Common myeloid progenitor, CD34-positive (primary cell): ENCODE measurements at regions of chr11 and their contacts with region 1.

Region 1: DNA sequence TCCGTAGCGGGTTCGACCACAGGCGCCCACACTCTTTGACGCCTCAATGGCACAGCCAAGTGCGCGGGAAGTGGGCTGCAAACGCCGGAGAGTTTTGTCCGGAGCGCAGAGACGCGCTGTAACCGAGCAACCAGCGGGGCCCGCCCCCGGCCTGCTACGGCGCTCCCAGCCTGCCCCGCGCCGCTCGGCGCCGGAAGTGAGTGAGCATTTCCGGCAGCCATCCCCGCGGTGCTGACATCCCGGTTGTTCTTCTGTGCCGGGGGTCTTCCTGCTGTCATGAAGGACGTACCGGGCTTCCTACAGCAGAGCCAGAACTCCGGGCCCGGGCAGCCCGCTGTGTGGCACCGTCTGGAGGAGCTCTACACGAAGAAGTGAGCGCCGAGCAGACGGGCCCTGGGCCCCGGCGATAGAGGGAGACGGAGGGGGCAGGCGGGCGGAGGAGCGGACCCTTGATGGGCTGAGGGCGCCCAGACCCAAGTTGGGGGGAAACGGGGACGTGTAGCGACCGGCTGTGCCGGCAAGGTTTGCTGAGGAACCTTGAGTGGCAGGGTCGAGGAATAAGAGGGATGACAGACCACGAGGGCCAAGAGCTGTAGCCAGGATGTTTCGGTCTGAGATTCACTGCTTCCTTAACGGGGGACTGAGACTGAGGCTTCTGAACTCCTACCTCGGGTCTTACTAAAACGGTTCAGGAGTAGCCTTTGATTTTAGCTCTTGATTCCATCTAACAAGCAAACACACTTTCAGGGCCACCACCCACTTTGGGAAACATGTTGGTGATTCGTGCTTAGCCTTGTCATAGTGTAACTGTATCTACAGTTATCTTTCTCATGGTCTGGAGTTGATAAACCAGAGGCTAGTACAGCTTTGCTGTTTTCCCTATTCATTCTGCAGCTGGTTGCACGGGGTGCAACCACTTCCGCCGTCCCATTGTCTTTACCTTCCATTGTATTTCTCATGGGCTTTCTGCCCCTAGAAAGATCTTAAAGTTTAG is at the start of gene PSMD13:
- DNase-seq: peak; percentile 89 to 91 (median 90)
- H3K4me3 ChIP-seq: peak within 1 kb of the TSS; percentile 88 to 99 (median 94)
- H3K27ac ChIP-seq: peak within 1 kb of the TSS; percentile 93 to 97
- H3K4me1 ChIP-seq: peaks cover 12 to 28% (median 19%) of the 10 kb centered on the region in 4 experiments
- H3K27me3 ChIP-seq: no peaks in the 10 kb centered on the region

Region 2: GRCh38 chr11:207208-207862 is 29.7 kb before region 1 on chr11 and contains the starts of genes BET1L and RIC8A:
- CTCF ChIA-PET with region 1: interaction called, 5 read pairs
- POLR2A ChIA-PET with region 1: interaction called, 11 read pairs
- DNase-seq: peak; percentile 99 to 100 (median 100)
- H3K4me3 ChIP-seq: peak within 1 kb of the TSS; percentile 79 to 99 (median 92)
- H3K27ac ChIP-seq: peak within 1 kb of the TSS; percentile 92 to 97
- H3K4me1 ChIP-seq: peaks cover 13 to 61% (median 53%) of the 10 kb centered on the region in 4 experiments
- H3K27me3 ChIP-seq: no peaks in the 10 kb centered on the region

Region 3: DNA sequence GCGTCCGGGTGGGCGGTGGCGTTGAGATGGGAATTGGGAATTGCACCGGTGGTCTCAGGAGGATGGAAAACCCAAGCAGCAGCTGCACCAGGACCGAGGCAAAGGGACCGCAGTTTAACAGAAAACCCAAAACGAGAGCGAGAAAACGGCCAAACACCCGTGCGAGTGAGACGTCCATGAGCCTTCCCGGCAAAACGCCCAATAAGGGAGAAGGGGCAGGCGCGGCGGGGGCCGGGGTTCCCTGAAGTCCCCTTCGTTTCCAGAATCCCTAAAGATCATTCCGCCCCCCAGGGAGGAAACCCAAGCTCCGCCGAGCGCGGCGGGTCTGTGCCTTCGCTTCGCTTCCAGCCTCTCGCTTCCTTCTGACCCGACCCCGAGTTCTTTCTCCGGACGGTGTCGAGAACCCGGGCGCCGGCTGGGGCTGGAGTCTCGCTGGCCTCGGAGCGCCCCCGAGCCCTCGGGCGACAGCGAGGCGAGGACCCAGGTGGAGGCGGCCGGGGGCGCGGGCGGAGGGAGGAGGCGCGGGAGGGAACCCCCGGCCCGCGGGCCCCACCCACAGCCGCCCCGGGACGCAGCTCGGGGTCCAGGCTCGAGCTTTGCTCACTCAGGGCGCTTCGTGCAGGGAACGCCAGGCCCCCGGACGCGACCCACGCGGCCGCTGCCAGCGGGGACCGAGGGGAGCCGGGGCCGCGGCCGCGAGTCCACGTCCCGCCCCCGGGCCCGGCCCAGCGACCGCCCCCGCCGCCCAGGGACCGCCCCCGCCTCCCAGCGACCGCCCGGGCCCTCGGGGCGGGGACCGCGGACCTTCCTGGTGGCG is 51.5 kb after region 1 on chr11 and contains the start of gene PGGHG:
- CTCF ChIA-PET with region 1: no interaction called
- POLR2A ChIA-PET with region 1: no interaction called
- DNase-seq: peak in 1 of 3 donors; percentile 42
- H3K4me3 ChIP-seq: peak within 1 kb of the TSS; percentile 40 to 75 (median 65)
- H3K27ac ChIP-seq: peak within 1 kb of the TSS in 1 of 2 experiments; percentile 43
- H3K4me1 ChIP-seq: peaks cover 0 to 23% (median 17%) of the 10 kb centered on the region in 4 experiments
- H3K27me3 ChIP-seq: peaks cover 0 to 23% (median 13%) of the 10 kb centered on the region in 5 experiments